ENCODE measurements at regions of chr3 and their contacts with region 1.

Region 1: DNA sequence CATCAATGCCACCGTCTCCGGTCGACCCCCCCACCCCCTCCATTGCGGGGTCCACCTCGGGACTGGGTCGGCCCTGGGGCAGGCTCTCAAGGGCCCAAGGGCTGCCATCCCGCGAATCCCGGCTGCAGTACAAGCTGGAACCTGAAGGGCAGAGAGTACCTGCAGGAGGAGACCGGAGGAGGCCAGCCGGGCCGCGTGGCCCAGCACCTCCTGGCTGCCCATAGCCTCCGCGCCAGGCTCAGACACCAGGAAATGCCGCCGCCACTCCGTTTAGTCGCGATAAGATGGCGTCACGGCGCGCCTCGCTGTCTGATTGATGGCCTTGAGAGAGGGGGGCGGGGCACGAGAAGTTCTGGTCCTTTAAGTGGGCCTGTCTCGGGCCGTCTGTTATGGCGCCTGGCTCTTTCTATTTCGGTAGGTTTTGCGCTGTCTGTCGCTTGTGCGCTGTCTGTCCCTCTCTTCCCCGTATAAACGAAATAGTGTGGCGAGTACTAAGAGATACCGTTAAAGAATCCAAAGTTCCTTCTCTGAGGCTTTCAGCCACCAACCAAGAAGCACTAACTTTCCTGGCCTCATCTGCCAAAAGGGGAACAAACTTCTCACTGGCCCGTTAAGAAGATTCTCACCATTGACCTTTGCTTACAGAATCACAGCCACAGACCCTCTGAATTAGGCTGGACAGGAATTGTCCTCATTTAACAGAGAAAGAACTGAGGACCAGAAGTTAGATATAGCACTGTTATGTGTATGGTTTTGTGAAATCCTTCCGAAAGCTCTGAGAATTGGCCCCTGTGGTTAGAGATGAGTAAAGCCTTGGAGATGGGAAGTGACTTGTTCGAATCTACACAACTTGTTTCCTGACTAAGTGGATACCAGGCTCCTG is at the start of gene RFT1:
- DNase-seq: peak; percentile 98
- H3K4me3 Mint-ChIP-seq: peak within 1 kb of the TSS; percentile 92
- H3K27ac Mint-ChIP-seq: peak within 1 kb of the TSS; percentile 97
- H3K4me1 Mint-ChIP-seq: peaks cover 8% of the 10 kb centered on the region
- H3K27me3 Mint-ChIP-seq: no peaks in the 10 kb centered on the region
- CTCF ChIP-seq: no peak
- total RNA-seq, gene RFT1: 40.1 and 42.7 TPM in 2 replicates

Region 2: GRCh38 chr3:53114011-53114400 is 16.4 kb before region 1 on chr3:
- CTCF ChIA-PET with region 1: interaction called, 44 read pairs
- POLR2A ChIA-PET with region 1: interaction called, 4 read pairs
- intact Hi-C with region 1: loop called (anchors 1 kb)
- DNase-seq: peak; percentile 82
- H3K4me3 Mint-ChIP-seq: no peak overlapping the region
- H3K27ac Mint-ChIP-seq: no peak overlapping the region
- H3K4me1 Mint-ChIP-seq: peaks cover 15% of the 10 kb centered on the region
- H3K27me3 Mint-ChIP-seq: no peaks in the 10 kb centered on the region
- CTCF ChIP-seq: peak; percentile 85

Region 3: DNA sequence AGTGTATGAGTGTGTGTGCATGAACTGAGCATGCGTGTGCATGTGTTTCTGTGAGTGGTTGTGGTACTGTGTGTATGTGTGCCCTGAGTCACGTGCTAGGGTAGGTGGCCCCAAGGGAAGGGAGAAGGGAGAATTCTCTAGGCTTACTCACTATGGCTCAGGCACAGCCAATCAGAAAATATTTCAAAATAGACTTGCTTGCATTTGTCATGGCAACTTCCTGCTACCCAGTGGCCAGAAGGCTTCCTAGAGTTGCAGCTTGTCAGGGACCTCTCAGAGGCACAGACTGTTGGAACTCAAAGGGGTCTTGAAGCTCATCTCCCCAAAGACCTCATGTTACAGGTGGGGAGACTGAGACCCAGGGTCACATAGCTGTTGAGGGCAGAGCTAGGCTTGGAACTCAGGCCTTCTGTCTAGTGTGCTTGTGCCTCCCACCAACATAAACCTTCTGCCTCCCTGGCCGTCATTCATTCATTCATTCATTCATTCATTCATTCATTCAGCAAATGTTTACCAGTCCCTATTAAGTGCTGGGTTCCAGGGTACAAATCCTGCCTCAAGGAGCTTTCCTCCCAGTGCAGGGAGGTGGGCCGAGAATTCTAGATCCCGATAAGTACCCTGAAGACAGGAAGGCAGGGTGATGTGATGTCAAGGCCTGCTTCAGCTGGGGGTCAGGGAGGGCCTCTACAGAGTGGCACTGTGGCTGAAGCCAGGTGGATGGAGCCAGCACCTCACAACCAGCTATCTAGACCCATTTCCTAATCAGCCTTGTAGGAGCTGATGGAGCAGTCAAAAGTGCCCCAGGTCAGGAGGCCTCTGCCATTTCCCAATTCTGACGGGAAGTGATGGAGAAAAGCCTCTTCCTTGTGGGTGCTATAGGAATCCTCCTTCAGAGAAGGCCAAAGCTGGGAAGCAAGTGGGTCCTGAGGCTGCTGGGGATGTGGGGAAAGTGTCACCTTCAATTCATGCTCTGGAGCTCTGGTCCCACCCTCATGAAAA is 10.7 kb after region 1 on chr3:
- CTCF ChIA-PET with region 1: interaction called, 15 read pairs
- POLR2A ChIA-PET with region 1: interaction called, 18 read pairs
- intact Hi-C with region 1: no loop called
- DNase-seq: peak; percentile 56
- H3K4me3 Mint-ChIP-seq: no peak overlapping the region
- H3K27ac Mint-ChIP-seq: no peak overlapping the region
- H3K4me1 Mint-ChIP-seq: peaks cover 7% of the 10 kb centered on the region
- H3K27me3 Mint-ChIP-seq: no peaks in the 10 kb centered on the region
- CTCF ChIP-seq: no peak

Region 4: DNA sequence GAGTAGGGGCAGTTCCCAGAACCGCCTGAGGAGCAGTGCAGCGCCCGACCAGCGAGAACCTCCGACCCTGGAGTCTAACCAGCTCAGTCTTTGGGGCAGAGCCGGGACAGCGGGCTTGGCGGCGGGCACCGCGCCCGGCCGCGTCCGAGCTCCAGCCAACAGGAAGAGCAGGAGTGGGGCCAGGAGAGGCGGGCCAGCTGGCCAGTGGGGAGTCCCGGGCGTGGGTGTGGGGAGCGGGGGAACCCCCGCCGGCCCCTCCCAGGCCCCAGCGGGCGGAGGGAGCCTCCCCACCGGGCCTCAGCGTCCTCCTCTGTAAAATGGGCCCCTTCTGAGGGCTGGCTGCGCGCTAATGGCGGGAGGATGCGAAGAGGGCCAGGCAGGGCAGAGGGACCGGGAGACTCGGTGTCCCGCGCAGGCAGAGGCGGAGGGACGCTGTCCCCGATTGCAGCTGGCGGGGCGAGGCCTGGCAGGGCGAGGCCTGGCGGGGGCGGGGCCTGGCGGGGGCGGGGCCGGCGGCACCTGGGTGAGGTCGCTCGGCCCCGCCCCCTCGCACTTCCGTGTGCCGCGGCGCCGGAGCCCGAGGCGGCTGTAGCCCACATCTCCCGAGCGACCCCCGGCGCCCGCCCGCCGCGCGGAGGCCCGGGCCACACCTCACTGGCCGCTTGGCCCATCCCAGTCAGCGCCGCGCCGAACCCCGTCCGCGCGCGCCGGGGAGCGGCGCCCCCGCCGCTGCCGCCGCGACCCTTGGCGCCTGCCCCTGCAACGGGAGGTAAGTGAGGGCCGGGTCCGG is 30.4 kb after region 1 on chr3 and contains the start of gene PRKCD:
- CTCF ChIA-PET with region 1: interaction called, 25 read pairs
- POLR2A ChIA-PET with region 1: interaction called, 6 read pairs
- intact Hi-C with region 1: loop called (anchors 2 kb)
- DNase-seq: peak; percentile 90
- H3K4me3 Mint-ChIP-seq: peak within 1 kb of the TSS; percentile 89
- H3K27ac Mint-ChIP-seq: peak within 1 kb of the TSS; percentile 71
- H3K4me1 Mint-ChIP-seq: peaks cover 20% of the 10 kb centered on the region
- H3K27me3 Mint-ChIP-seq: no peaks in the 10 kb centered on the region
- CTCF ChIP-seq: peak; percentile 27
- total RNA-seq, gene PRKCD: 9.6 and 9.8 TPM in 2 replicates

Measured in MCF 10A (cell line).